ENCODE measurements at regions of chr5 and their contacts with region 1.

Region 1: DNA sequence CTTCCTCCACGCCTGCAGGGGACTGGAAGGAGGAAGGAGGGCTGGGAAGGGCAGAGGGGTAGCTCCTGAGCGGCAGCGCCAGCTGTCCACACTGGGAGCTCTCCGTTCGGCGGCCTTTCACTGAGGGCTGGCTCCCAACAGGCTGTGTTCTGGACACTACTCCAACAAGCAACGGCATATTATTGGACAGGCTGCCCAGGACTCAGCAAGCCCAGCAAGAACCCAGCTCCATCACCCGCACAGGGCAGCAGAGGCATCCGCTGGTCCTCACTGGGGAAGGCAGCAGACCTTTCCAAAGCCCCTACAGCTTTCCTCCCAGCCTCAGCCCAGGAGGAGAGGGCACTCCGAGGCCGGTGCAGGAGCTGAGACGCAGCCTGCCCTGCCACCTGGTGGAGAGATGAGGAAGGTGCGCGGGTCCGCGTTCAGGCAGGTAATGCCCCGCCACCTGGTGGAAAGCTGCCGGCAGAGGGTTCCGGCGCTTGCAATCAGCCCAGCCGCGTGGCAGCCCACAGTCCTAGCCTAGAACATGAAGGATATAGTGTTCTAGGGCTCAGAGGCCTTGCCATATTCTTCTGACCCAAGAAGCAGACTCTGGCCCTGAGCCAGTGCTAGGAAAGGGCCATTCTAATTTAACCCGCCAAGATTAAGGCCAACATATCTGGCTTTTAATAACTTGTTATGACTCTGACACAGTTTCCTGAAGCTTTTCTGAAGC is 74.4 kb downstream of the NRG2 start:
- DNase-seq: peak; percentile 97
- ATAC-seq: peak; percentile 98
- H3K4me3 Mint-ChIP-seq: no peak overlapping the region
- H3K27ac Mint-ChIP-seq: no peak overlapping the region
- H3K4me1 Mint-ChIP-seq: no peaks in the 10 kb centered on the region
- H3K27me3 Mint-ChIP-seq: peaks cover 15% of the 10 kb centered on the region
- CTCF ChIP-seq: peak; percentile 98

Region 2: DNA sequence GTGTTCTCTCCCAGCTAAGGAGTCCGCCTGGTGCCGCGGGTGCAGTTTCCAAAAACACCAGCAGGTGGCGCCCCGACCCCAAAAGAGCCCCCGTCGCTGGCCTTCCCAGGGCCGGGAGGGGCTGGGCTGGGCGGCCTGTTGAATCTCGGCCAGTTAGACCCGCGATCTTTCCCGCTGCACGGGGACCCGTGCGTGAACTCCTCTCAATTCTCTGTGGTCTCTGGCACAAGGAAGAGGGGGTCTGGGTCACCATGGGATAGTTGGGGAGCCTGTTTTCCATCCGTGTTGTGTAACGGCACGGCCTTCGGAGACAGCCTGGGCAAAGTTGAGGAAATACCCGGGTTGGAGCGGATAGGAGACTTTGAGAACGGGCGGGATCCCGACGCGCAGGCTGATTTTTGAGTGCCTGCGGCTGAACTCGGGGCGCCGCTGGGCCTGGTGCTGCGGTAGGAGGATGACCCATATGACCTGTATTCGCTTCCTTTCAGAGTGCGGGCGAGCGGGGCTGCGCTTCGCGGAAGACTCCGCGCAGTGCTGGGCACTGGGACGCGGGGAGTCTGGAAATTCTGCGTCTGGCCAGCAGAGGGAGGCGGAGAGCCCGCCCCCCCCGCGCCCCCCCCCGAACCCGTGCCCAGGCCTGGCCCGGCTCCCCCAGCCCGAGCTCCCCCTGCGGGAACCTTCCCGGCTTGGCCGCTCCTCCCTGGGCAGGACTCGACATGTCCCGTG is 181.0 kb before region 1 on chr5:
- CTCF ChIA-PET with region 1: interaction called, 207 read pairs
- POLR2A ChIA-PET with region 1: no interaction called
- DNase-seq: peak; percentile 94
- ATAC-seq: peak; percentile 81
- H3K4me3 Mint-ChIP-seq: peak overlapping the region; percentile 91
- H3K27ac Mint-ChIP-seq: no peak overlapping the region
- H3K4me1 Mint-ChIP-seq: peaks cover 4% of the 10 kb centered on the region
- H3K27me3 Mint-ChIP-seq: peaks cover 66% of the 10 kb centered on the region
- CTCF ChIP-seq: peak; percentile 98

Region 3: GRCh38 chr5:139844472-139845145 is 124.1 kb before region 1 on chr5:
- CTCF ChIA-PET with region 1: interaction called, 55 read pairs
- POLR2A ChIA-PET with region 1: no interaction called
- DNase-seq: peak; percentile 94
- ATAC-seq: peak; percentile 86
- H3K4me3 Mint-ChIP-seq: no peak overlapping the region
- H3K27ac Mint-ChIP-seq: no peak overlapping the region
- H3K4me1 Mint-ChIP-seq: peaks cover 9% of the 10 kb centered on the region
- H3K27me3 Mint-ChIP-seq: peaks cover 51% of the 10 kb centered on the region
- CTCF ChIP-seq: peak; percentile 58

Region 4: DNA sequence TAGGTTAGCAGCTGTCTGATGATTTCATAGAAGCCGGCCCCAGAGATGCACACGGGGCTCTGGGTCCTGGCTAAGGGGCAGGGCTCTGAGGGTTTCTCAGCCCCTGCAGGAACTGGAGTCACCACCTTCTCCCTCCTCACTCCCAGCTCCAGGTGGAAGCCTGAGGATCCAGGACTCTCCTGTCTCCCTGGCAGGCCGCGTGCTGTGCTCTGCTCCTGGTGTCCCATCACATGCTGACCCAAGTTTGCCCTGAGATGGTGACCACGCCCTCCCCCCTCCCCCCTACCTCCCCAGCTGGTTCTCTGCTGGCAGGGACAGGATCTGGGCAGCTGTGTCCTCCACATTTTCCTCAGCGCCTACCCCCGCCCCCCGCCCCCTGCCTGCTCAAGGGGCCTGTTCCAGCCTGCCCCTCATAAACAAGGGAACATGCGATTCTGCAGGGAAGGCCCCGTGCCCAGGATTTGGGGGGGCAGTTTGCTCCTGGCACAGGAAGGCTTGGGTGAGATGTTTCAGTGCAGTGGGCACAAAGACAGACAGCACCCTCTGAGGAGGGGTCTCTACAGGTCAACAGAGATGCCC is 85.7 kb before region 1 on chr5:
- CTCF ChIA-PET with region 1: interaction called, 61 read pairs
- POLR2A ChIA-PET with region 1: no interaction called
- DNase-seq: no peak
- ATAC-seq: no peak
- H3K4me3 Mint-ChIP-seq: no peak overlapping the region
- H3K27ac Mint-ChIP-seq: no peak overlapping the region
- H3K4me1 Mint-ChIP-seq: peaks cover 10% of the 10 kb centered on the region
- H3K27me3 Mint-ChIP-seq: peaks cover 2% of the 10 kb centered on the region; the same call in 1 of the 2 replicates
- CTCF ChIP-seq: no peak

Region 5: GRCh38 chr5:139911425-139912120 is 57.1 kb before region 1 on chr5:
- CTCF ChIA-PET with region 1: interaction called, 83 read pairs
- POLR2A ChIA-PET with region 1: no interaction called
- DNase-seq: no peak
- ATAC-seq: no peak
- H3K4me3 Mint-ChIP-seq: no peak overlapping the region
- H3K27ac Mint-ChIP-seq: no peak overlapping the region
- H3K4me1 Mint-ChIP-seq: peaks cover 10% of the 10 kb centered on the region
- H3K27me3 Mint-ChIP-seq: peaks cover 8% of the 10 kb centered on the region; the same call in 1 of the 2 replicates
- CTCF ChIP-seq: no peak

Region 6: DNA sequence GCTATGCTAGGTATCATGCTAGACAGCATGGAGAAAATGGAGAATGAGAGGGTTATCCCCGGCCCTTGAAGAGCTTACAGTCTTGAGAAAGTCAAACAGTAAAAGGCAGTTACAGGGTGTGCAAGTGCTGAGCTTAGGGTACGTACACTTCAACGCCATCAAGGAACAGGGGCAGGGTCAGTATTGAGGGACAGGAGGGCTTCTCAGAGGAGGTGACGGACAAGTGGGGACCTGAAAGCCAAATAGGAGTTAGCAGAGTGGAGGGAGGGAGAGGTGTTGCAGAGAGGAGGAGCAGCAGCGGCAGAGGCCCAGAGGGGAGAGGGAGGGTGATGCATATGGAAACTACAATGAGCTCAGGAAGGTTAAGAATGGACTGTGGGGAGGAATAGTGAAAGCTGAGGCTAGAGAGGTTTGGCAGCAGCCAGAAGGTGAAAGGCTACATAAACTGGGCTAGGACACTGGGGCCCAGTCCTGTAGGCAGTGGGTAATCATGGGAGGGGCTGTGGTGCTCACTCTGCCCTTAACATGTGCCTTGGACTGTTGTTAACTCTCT is 13.6 kb before region 1 on chr5:
- CTCF ChIA-PET with region 1: interaction called, 95 read pairs
- POLR2A ChIA-PET with region 1: no interaction called
- DNase-seq: no peak
- ATAC-seq: peak; percentile 68
- H3K4me3 Mint-ChIP-seq: no peak overlapping the region
- H3K27ac Mint-ChIP-seq: no peak overlapping the region
- H3K4me1 Mint-ChIP-seq: peaks cover 33% of the 10 kb centered on the region
- H3K27me3 Mint-ChIP-seq: no peaks in the 10 kb centered on the region
- CTCF ChIP-seq: no peak

Region 7: DNA sequence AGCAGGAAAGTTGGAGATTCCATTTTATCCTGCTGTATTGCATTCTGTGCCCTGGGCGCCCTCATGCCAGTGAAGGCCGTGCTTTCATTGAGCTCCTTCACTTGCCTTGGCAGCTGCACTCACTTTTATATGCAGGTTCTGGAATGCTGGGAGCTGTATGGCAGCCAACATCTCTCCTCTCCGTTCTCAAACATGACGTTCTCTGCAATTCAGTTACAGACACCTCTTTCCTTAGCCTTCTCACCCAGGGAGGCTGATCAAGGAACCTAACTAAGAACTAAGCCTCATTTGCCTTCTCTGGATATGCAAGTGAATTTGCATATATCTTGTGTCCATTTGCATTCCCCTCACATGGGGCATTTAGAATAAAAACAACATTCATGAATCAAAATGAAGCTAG is 115.8 kb after region 1 on chr5:
- CTCF ChIA-PET with region 1: no interaction called
- POLR2A ChIA-PET with region 1: no interaction called
- DNase-seq: no peak
- ATAC-seq: no peak
- H3K4me3 Mint-ChIP-seq: no peak overlapping the region
- H3K27ac Mint-ChIP-seq: peak overlapping the region; percentile 68; the same call in 1 of the 2 replicates
- H3K4me1 Mint-ChIP-seq: peaks cover 5% of the 10 kb centered on the region
- H3K27me3 Mint-ChIP-seq: peaks cover 17% of the 10 kb centered on the region
- CTCF ChIP-seq: no peak

Region 8: GRCh38 chr5:140145818-140146522 is 177.3 kb after region 1 on chr5:
- CTCF ChIA-PET with region 1: interaction called, 17 read pairs
- POLR2A ChIA-PET with region 1: no interaction called
- DNase-seq: peak; percentile 71
- ATAC-seq: peak; percentile 57
- H3K4me3 Mint-ChIP-seq: peak overlapping the region; percentile 75
- H3K27ac Mint-ChIP-seq: no peak overlapping the region
- H3K4me1 Mint-ChIP-seq: peaks cover 17% of the 10 kb centered on the region
- H3K27me3 Mint-ChIP-seq: peaks cover 53% of the 10 kb centered on the region
- CTCF ChIP-seq: no peak

Region 9: DNA sequence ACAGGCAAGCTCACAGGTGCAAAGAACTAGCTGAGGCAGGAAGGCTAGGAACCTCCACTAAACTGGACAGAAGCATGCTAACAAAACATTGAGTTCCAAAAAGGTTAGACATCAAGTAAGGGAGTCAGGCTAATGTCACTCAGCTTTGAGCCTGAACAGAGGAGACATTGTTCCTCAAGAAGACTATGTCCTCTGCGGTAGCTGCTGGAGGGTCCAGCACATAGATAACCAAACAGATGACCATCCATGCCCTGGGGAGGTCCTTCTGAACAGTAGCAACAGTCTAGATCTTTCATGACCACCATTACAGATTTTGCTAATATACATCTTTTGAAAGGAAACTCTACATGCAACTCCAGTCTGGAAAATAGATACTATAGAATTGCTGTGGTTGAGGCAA is 264.0 kb after region 1 on chr5:
- CTCF ChIA-PET with region 1: no interaction called
- POLR2A ChIA-PET with region 1: no interaction called
- DNase-seq: no peak
- ATAC-seq: no peak
- H3K4me3 Mint-ChIP-seq: no peak overlapping the region
- H3K27ac Mint-ChIP-seq: no peak overlapping the region
- H3K4me1 Mint-ChIP-seq: no peaks in the 10 kb centered on the region
- H3K27me3 Mint-ChIP-seq: no peaks in the 10 kb centered on the region
- CTCF ChIP-seq: no peak